ENCODE measurements at regions of chr14 and their contacts with region 1.

Region 1: DNA sequence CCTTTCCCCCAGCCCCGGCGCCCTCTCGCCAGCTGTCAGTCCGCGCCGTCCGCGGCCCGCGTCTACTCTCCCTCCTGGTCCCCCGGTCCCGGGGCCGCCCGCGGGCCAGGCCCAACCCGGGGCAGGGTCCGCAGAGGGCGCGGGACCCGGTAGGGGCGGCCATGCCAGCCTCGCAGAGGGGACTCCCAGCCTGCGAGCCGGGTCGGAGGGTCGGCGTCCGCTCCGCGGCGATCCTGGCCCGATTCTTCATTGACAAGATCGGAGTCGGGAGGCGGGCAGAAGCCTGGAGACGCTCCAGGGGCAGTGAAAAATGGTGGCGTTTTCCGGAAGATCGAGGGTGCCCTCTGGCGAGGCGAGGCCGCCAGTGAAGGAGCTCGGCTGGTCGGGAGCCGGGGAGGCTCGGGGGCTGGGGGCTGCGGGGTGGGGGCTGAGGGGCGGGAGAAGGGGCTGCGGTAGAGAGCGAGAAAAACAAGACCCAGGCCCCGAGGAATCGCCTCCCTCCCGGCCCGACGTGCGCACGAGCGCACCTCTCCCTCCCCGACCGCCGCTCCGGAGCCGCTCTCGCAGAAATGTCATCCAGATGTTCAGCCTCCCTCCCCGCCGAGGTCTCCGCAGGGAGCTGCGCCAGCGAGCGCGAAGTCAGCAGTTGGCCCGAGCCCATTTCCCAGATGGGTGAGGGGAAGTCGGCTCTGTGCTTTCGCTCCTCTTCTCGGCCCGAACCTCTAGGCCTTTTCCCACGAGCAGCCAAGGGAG is 647 bp upstream of the TGFB3 start:
- DNase-seq: peak; percentile 74

Region 2: GRCh38 chr14:75709207-75709812 is 273.1 kb before region 1 on chr14:
- CTCF ChIA-PET with region 1: interaction called, 17 read pairs
- POLR2A ChIA-PET with region 1: interaction called, 10 read pairs
- DNase-seq: peak; percentile 71

Region 3: GRCh38 chr14:75906676-75907280 is 75.7 kb before region 1 on chr14:
- CTCF ChIA-PET with region 1: interaction called, 19 read pairs
- POLR2A ChIA-PET with region 1: interaction called, 5 read pairs
- DNase-seq: peak; percentile 54

Region 4: GRCh38 chr14:76040704-76041103 is 58.3 kb after region 1 on chr14:
- CTCF ChIA-PET with region 1: no interaction called
- POLR2A ChIA-PET with region 1: no interaction called
- DNase-seq: no peak